ENCODE measurements at regions of chrX and their contacts with region 1.

Region 1: GRCh38 chrX:77899081-77899828 is at the start of gene COX7B:
- DNase-seq: peak in 4 of 5 donors; percentile 49 to 74 (median 62)
- ATAC-seq: peak; percentile 73 to 81 (median 78)
- H3K4me3 ChIP-seq: peak within 1 kb of the TSS; percentile 41 to 86 (median 64)
- H3K27ac ChIP-seq: peak within 1 kb of the TSS; percentile 79 to 94 (median 88)
- H3K4me1 ChIP-seq: peaks cover 0 to 23% (median 3%) of the 10 kb centered on the region in 12 donors
- H3K27me3 ChIP-seq: no peaks in the 10 kb centered on the region
- CTCF ChIP-seq: peak in 10 of 12 donors; percentile 5 to 64 (median 36)
- POLR2A ChIP-seq: peak; percentile 56 to 75
- total RNA-seq, gene COX7B: 815 to 2,958 (median 1,377) TPM

Region 2: GRCh38 chrX:77446029-77446585 is 453.1 kb before region 1 on chrX:
- intact Hi-C with region 1: loop called in 1 of 10 experiments (anchors 10 kb)
- DNase-seq: no peak
- ATAC-seq: peak in 1 of 4 donors; percentile 35
- H3K4me3 ChIP-seq: peak overlapping the region in 11 of 12 donors; percentile 0 to 58 (median 45)
- H3K27ac ChIP-seq: no peak overlapping the region
- H3K4me1 ChIP-seq: peaks cover 0 to 12% (median 0%) of the 10 kb centered on the region in 12 donors
- H3K27me3 ChIP-seq: peaks cover 0 to 28% (median 0%) of the 10 kb centered on the region in 9 donors
- CTCF ChIP-seq: peak in 10 of 12 donors; percentile 12 to 45 (median 36)
- POLR2A ChIP-seq: no peak

Region 3: GRCh38 chrX:77785486-77786364 is 113.5 kb before region 1 on chrX and contains the start of gene ATRX:
- intact Hi-C with region 1: loop called in 4 of 10 experiments (anchors 10 kb)
- DNase-seq: peak; percentile 72 to 80 (median 75)
- ATAC-seq: peak; percentile 90 to 96 (median 93)
- H3K4me3 ChIP-seq: peak within 1 kb of the TSS; percentile 50 to 94 (median 68)
- H3K27ac ChIP-seq: peak within 1 kb of the TSS; percentile 78 to 95 (median 89)
- H3K4me1 ChIP-seq: peaks cover 0 to 33% (median 7%) of the 10 kb centered on the region in 12 donors
- H3K27me3 ChIP-seq: no peaks in the 10 kb centered on the region
- CTCF ChIP-seq: no peak
- POLR2A ChIP-seq: peak in 1 of 2 donors; percentile 26
- total RNA-seq, gene ATRX: 52.4 to 102 (median 85.0) TPM

Region 4: GRCh38 chrX:77962068-77962902 is 63.0 kb after region 1 on chrX:
- intact Hi-C with region 1: no loop called
- DNase-seq: no peak
- ATAC-seq: no peak
- H3K4me3 ChIP-seq: peak overlapping the region in 1 of 12 donors; percentile 28
- H3K27ac ChIP-seq: peak overlapping the region in 1 of 12 donors; percentile 16
- H3K4me1 ChIP-seq: no peaks in the 10 kb centered on the region
- H3K27me3 ChIP-seq: no peaks in the 10 kb centered on the region
- CTCF ChIP-seq: no peak
- POLR2A ChIP-seq: no peak

Region 5: GRCh38 chrX:78029663-78030062 is 130.4 kb after region 1 on chrX:
- intact Hi-C with region 1: loop called in 1 of 10 experiments (anchors 10 kb)
- DNase-seq: peak in 1 of 5 donors; percentile 6
- ATAC-seq: no peak
- H3K4me3 ChIP-seq: no peak overlapping the region
- H3K27ac ChIP-seq: no peak overlapping the region
- H3K4me1 ChIP-seq: no peaks in the 10 kb centered on the region
- H3K27me3 ChIP-seq: no peaks in the 10 kb centered on the region
- CTCF ChIP-seq: peak; percentile 15 to 47 (median 34)
- POLR2A ChIP-seq: no peak

Region 6: GRCh38 chrX:78103623-78104446 is 204.6 kb after region 1 on chrX and contains the start of gene PGK1:
- intact Hi-C with region 1: loop called in 4 of 10 experiments (anchors 5 to 10 kb)
- DNase-seq: peak; percentile 95 to 98 (median 96)
- ATAC-seq: peak; percentile 96 to 98 (median 98)
- H3K4me3 ChIP-seq: peak within 1 kb of the TSS; percentile 38 to 96 (median 76)
- H3K27ac ChIP-seq: peak within 1 kb of the TSS; percentile 85 to 96 (median 92)
- H3K4me1 ChIP-seq: peaks cover 0 to 38% (median 30%) of the 10 kb centered on the region in 12 donors
- H3K27me3 ChIP-seq: no peaks in the 10 kb centered on the region
- CTCF ChIP-seq: no peak
- POLR2A ChIP-seq: peak; percentile 29 to 78
- total RNA-seq, gene PGK1: 291 to 616 (median 458) TPM